ENCODE measurements at regions of chr5 and their contacts with region 1.

Region 1: DNA sequence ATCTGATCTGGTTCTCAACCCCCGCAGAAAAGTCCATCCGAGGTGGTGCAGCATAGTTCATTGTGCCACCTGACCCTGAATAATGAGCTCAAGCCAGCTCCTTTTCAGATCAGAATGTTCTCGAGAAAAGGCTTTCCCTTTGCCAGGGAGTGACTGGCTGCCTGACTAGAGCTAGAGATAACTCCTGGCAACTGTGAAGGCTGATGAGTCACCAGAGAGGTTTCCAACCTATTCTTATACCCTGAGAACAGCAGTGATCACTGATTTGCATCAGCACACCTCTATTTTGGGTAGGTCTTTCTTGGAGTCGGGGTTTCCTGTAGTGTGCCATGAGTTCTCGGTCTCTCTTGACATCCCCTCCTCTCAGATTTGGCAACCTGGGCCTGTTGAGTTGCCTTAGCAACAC is 127.9 kb downstream of the PIK3R1 start:
- DNase-seq: peak; percentile 20
- H3K4me3 Mint-ChIP-seq: no peak overlapping the region
- H3K27ac Mint-ChIP-seq: no peak overlapping the region
- H3K4me1 Mint-ChIP-seq: peaks cover 52% of the 10 kb centered on the region
- H3K27me3 Mint-ChIP-seq: peaks cover 7% of the 10 kb centered on the region

Region 2: GRCh38 chr5:68170826-68171558 is 172.4 kb before region 1 on chr5:
- intact Hi-C with region 1: no loop called
- DNase-seq: no peak
- H3K4me3 Mint-ChIP-seq: no peak overlapping the region
- H3K27ac Mint-ChIP-seq: no peak overlapping the region
- H3K4me1 Mint-ChIP-seq: peaks cover 3% of the 10 kb centered on the region
- H3K27me3 Mint-ChIP-seq: peaks cover 5% of the 10 kb centered on the region

Region 3: GRCh38 chr5:68279984-68280383 is 63.4 kb before region 1 on chr5:
- intact Hi-C with region 1: loop called (anchors 2 kb)
- DNase-seq: peak; percentile 61
- H3K4me3 Mint-ChIP-seq: peak overlapping the region; percentile 83
- H3K27ac Mint-ChIP-seq: peak overlapping the region; percentile 87
- H3K4me1 Mint-ChIP-seq: peaks cover 81% of the 10 kb centered on the region
- H3K27me3 Mint-ChIP-seq: no peaks in the 10 kb centered on the region

Region 4: GRCh38 chr5:68303038-68303738 is 40.2 kb before region 1 on chr5:
- intact Hi-C with region 1: loop called (anchors 1 kb)
- DNase-seq: no peak
- H3K4me3 Mint-ChIP-seq: no peak overlapping the region
- H3K27ac Mint-ChIP-seq: peak overlapping the region; percentile 74
- H3K4me1 Mint-ChIP-seq: peaks cover 55% of the 10 kb centered on the region
- H3K27me3 Mint-ChIP-seq: peaks cover 4% of the 10 kb centered on the region

Region 5: DNA sequence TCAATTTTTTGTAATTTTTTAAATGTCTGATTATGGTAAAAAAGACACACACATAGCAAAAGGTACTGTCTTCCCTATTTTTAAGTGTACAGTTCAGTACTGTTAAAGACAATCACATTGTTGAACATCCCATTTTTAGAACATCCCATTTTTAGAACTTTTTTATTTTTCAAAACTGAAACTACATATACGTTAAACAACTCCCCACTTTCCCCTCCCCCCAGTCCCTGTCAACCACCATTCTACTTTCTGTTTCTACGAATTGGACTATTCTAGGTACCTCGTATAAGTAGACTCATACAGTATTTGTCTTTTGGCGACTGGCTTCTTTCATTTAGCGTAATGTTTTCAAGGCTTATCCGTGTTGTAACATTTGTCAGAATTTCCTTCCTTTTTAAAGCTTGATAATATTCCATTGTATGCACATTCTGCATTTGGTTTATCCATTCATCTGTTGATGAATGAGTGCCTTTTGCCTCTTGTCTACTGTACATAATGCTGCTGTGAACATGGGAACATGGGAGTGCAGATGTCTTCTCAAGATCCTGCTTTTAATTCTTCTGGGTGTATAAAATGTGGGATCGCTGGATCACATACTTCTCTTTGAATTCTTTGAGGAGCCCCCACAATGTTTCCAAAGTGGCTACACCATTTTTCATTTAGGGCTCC is 26.2 kb after region 1 on chr5:
- intact Hi-C with region 1: loop called (anchors 2 kb)
- DNase-seq: peak; percentile 54
- H3K4me3 Mint-ChIP-seq: peak overlapping the region; percentile 7
- H3K27ac Mint-ChIP-seq: peak overlapping the region; percentile 77
- H3K4me1 Mint-ChIP-seq: peaks cover 60% of the 10 kb centered on the region
- H3K27me3 Mint-ChIP-seq: no peaks in the 10 kb centered on the region

Region 6: GRCh38 chr5:68379275-68380036 is 36.0 kb after region 1 on chr5:
- intact Hi-C with region 1: loop called (anchors 1 kb)
- DNase-seq: no peak
- H3K4me3 Mint-ChIP-seq: no peak overlapping the region
- H3K27ac Mint-ChIP-seq: peak overlapping the region; percentile 61
- H3K4me1 Mint-ChIP-seq: peaks cover 70% of the 10 kb centered on the region
- H3K27me3 Mint-ChIP-seq: peaks cover 2% of the 10 kb centered on the region

Region 7: GRCh38 chr5:68446487-68446894 is 103.1 kb after region 1 on chr5:
- intact Hi-C with region 1: no loop called
- DNase-seq: no peak
- H3K4me3 Mint-ChIP-seq: no peak overlapping the region
- H3K27ac Mint-ChIP-seq: no peak overlapping the region
- H3K4me1 Mint-ChIP-seq: peaks cover 10% of the 10 kb centered on the region
- H3K27me3 Mint-ChIP-seq: peaks cover 22% of the 10 kb centered on the region

Measured in activated T-helper 2 cell treated with anti-CD3 and anti-CD28 coated beads, Interferon-gamma antibody, Interleukin-2, Interleukin-4, amounts not matched to agents 10 μg/mL and 5 μg/mL and 100 μg/mL, durations not matched to agents 14 hours and 24 hours and 36 hours (primary cell).